AG04449 (cell line): ENCODE measurements at regions of chr14 and their contacts with region 1.

Region 1: DNA sequence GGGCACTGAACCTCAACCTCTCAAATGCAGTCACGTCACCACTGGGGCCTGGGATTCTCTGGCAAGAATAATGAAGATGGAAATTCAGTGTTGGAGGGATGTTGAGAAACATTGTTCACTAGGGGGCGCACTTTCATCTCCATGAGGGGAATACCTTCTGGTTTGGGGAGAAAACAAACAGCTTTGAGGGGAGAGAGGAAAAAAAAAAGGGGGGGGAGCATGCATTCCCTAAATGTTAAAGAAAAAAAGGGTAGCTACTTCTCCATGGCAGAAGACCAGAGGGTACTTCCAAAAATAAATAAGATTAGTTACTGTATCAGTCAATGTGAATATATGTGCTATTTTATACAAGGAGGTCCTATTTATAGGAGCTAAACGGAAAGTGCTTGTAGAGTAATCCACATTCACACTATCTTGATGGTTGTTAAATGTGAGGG is 5.8 kb upstream of the TBPL2 start:
- DNase-seq: no peak
- H3K4me3 ChIP-seq: no peak overlapping the region
- CTCF ChIP-seq: peak; percentile 69

Region 2: GRCh38 chr14:55579724-55580469 is 133.7 kb after region 1 on chr14 and contains the start of gene KTN1:
- CTCF ChIA-PET with region 1: interaction called, 13 read pairs
- POLR2A ChIA-PET with region 1: no interaction called
- DNase-seq: no peak
- H3K4me3 ChIP-seq: peak within 1 kb of the TSS; percentile 86
- CTCF ChIP-seq: no peak

Region 3: GRCh38 chr14:55610713-55611370 is 164.6 kb after region 1 on chr14:
- CTCF ChIA-PET with region 1: interaction called, 15 read pairs
- POLR2A ChIA-PET with region 1: no interaction called
- DNase-seq: no peak
- H3K4me3 ChIP-seq: no peak overlapping the region
- CTCF ChIP-seq: no peak

Region 4: DNA sequence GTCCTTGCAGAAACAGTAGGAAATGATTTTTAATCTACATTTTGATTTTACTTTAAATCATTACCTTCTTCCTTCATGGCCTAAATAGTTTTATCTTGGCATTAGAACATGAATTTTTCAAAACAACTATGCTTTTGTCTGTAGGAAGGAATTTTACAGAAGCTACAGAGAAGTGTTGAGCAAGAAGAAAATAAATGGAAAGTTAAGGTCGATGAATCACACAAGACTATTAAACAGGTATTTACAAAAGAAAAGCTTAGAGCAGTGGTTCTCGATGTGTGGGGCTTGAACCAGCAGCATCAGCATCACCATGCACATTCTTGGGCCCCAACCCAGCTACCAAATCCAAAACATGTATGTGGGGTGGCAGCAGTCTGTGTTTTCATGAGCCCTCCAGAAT is 225.4 kb after region 1 on chr14:
- CTCF ChIA-PET with region 1: interaction called, 31 read pairs
- POLR2A ChIA-PET with region 1: no interaction called
- DNase-seq: no peak
- H3K4me3 ChIP-seq: no peak overlapping the region
- CTCF ChIP-seq: no peak

Region 5: DNA sequence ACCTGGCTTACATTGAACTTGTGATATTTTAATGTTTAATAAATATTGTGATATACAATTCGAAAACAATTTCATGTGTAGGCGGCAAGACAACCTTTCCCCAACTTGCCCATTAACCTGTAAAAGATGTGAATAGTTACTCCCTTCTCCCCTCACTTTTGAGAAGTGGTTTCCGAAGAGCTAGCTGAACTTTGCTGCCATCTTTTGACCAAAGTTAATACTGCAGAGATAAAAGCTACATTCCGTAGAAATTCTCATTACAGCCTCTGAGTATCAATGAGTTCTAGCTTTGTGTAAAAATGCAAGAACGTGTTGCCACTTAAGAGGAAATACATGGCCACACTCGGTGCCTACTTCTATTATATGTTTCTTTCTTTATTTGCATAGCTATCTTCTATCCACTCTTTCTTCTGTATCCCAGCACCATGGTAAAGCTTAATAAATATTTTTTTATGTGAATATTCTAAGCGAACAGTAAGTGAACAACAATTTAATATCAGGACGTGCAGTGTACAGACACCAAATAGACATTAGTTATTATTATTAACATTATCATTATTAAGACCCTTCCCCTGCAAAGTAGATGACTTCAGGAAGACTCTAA is 1028.3 kb after region 1 on chr14:
- CTCF ChIA-PET with region 1: interaction called, 92 read pairs
- POLR2A ChIA-PET with region 1: no interaction called
- DNase-seq: no peak
- H3K4me3 ChIP-seq: no peak overlapping the region
- CTCF ChIP-seq: peak; percentile 51